ENCODE measurements at regions of chr11 and their contacts with region 1.

Region 1: GRCh38 chr11:111429066-111429506 is 50.0 kb upstream of the POU2AF1 start:
- DNase-seq: no peak
- ATAC-seq: peak; percentile 98
- H3K4me3 ChIP-seq: no peak overlapping the region
- H3K27ac ChIP-seq: no peak overlapping the region
- H3K4me1 ChIP-seq: peaks cover 6% of the 10 kb centered on the region; the same call in 1 of the 2 replicates
- H3K27me3 ChIP-seq: no peaks in the 10 kb centered on the region
- CTCF ChIP-seq: peak; percentile 82 to 96 (median 92)
- EP300 ChIP-seq: no peak
- POLR2A ChIP-seq: no peak
- RAD21 ChIP-seq: peak; percentile 87

Region 2: GRCh38 chr11:111260811-111261210 is 168.3 kb before region 1 on chr11:
- CTCF ChIA-PET with region 1: interaction called, 13 read pairs
- POLR2A ChIA-PET with region 1: no interaction called
- RAD21 ChIA-PET with region 1: no interaction called
- SMC1A ChIA-PET with region 1: no interaction called
- in situ Hi-C with region 1: no loop called
- intact Hi-C with region 1: no loop called
- DNase-seq: no peak
- ATAC-seq: no peak
- H3K4me3 ChIP-seq: no peak overlapping the region
- H3K27ac ChIP-seq: no peak overlapping the region
- H3K4me1 ChIP-seq: no peaks in the 10 kb centered on the region
- H3K27me3 ChIP-seq: no peaks in the 10 kb centered on the region; a peak in 1 of 4 replicates
- CTCF ChIP-seq: no peak
- EP300 ChIP-seq: no peak
- POLR2A ChIP-seq: no peak
- RAD21 ChIP-seq: no peak

Region 3: DNA sequence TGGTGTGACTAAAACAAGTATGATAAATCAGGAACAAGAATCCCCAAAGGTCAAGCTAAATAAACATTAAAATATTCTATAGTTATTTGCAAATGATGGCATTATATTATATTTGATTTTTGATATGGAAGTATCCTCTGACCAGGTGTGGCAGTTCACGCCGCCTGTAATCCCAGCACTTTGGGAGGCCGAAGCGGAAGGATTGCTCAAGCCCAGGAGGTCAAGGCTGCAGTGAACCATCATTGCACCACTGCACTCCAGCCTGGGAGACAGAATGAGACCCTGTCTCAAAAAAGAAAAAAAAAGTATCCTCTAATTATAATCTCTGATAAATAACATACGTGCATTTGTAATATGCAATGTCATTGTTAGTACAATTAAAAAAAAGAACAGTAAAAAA is 137.3 kb before region 1 on chr11:
- CTCF ChIA-PET with region 1: interaction called, 680 read pairs
- POLR2A ChIA-PET with region 1: no interaction called
- RAD21 ChIA-PET with region 1: interaction called, 13 read pairs
- SMC1A ChIA-PET with region 1: interaction called, 455 read pairs
- in situ Hi-C with region 1: no loop called
- intact Hi-C with region 1: no loop called
- DNase-seq: no peak
- ATAC-seq: no peak
- H3K4me3 ChIP-seq: no peak overlapping the region
- H3K27ac ChIP-seq: no peak overlapping the region
- H3K4me1 ChIP-seq: no peaks in the 10 kb centered on the region
- H3K27me3 ChIP-seq: no peaks in the 10 kb centered on the region
- CTCF ChIP-seq: no peak
- EP300 ChIP-seq: no peak
- POLR2A ChIP-seq: no peak
- RAD21 ChIP-seq: no peak

Region 4: DNA sequence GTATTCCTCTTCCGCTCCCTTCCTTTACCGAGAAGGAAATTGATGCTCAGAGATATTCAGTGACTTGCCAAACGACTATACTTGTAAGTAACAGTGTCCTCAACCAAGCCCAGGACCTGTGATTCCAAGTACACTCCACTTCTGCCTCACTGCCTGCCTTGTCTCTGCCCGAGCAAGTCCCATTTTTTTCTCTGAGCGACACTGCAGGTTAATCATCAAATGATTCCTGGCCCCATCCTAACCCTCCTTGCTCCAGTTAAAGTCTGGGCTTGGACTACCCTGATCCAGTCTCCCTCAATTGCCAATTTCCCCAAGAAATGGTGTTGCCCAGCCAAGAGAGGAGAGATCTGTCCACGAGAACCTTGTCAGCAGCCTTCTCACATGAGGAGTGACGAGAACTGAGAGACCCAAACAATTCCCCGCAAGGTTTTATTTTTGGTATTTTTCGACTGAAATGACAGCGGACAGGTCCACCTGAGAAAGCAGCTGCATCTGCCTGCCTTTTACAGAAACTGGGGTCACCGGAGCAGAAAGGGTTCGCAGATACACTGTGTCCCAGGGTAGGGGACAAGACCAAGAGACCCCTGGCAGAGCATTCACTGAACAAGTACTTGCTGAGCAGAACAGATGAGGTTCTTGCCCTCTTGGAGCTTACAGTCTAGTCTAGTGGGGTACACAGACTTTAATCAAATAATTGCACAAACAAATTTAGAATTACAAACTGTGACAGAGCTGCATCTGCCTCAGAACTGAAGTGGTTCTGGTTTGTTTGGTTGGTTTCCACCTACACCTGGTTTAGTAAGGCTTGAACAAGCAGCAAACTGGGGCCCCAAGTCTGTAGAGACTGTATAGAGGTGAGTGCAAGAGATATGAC is 61.4 kb before region 1 on chr11:
- CTCF ChIA-PET with region 1: interaction called, 213 read pairs
- POLR2A ChIA-PET with region 1: interaction called, 4 read pairs
- RAD21 ChIA-PET with region 1: interaction called, 657 read pairs
- SMC1A ChIA-PET with region 1: interaction called, 972 read pairs
- in situ Hi-C with region 1: no loop called
- intact Hi-C with region 1: no loop called
- DNase-seq: peak; percentile 80
- ATAC-seq: peak; percentile 60
- H3K4me3 ChIP-seq: peak overlapping the region; percentile 67
- H3K27ac ChIP-seq: peak overlapping the region; percentile 97
- H3K4me1 ChIP-seq: peaks cover 91% of the 10 kb centered on the region
- H3K27me3 ChIP-seq: no peaks in the 10 kb centered on the region
- CTCF ChIP-seq: no peak
- EP300 ChIP-seq: peak; percentile 78 to 92
- POLR2A ChIP-seq: peak; percentile 50; the same call in 1 of the 2 replicates
- RAD21 ChIP-seq: 0 out of 2 replicates have a peak, but pooled peaks have one; percentile 4

Region 5: DNA sequence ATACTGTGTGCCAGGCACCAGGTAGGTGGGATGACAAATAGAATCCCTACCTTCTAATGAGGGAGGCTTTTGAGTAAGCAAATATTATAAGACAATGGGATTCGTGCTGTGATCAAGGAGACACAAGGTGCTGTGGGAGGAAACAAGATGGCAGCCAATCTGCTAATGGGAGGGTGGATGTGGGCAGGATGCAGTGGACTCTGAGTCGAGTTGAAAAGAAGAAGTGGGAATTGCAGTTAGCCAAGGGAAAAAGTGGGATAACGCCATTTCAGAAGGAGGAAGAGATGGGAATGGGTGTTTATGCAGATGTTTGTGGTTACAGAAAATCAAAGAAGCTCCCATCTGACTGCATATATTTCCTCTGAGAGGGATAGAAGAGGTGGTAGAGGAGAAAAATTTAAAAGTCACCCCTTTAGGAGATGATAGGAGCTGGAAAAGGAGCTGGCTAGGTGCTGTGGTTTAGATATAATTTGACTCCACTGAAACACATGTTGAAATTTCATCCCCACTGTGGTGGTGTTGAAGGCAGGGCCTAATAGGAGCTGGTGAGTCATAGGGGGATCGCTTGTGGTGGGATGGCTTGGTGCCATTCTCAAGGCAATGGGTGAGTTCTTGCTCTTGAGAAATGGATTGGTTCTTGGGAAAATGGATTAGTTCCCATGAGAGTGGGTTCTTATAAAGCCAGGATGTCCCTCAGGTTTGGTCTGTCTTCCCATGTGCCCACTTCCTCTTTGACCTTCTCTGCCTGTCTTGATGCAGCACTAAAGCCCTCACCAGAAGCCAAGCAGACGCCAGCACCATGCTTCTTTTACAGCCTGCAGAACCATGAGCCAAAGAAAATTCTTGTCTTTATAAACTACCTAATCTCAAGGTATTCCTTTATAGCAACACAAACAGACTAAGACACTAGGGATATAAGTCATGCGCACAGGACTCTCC is 20.0 kb before region 1 on chr11:
- CTCF ChIA-PET with region 1: interaction called, 143 read pairs
- POLR2A ChIA-PET with region 1: no interaction called
- RAD21 ChIA-PET with region 1: interaction called, 77 read pairs
- SMC1A ChIA-PET with region 1: interaction called, 3 read pairs
- in situ Hi-C with region 1: no loop called
- intact Hi-C with region 1: no loop called
- DNase-seq: peak; percentile 91
- ATAC-seq: peak; percentile 69
- H3K4me3 ChIP-seq: peak overlapping the region; percentile 14; the same call in 1 of the 2 replicates
- H3K27ac ChIP-seq: peak overlapping the region; percentile 92
- H3K4me1 ChIP-seq: peaks cover 64% of the 10 kb centered on the region
- H3K27me3 ChIP-seq: no peaks in the 10 kb centered on the region
- CTCF ChIP-seq: no peak
- EP300 ChIP-seq: peak in 1 of 2 experiments; percentile 29; a peak in 1 of 4 replicates
- POLR2A ChIP-seq: no peak
- RAD21 ChIP-seq: no peak

Region 6: GRCh38 chr11:111446404-111447111 is 17.5 kb after region 1 on chr11:
- CTCF ChIA-PET with region 1: interaction called, 72 read pairs
- POLR2A ChIA-PET with region 1: interaction called, 4 read pairs
- RAD21 ChIA-PET with region 1: interaction called, 31 read pairs
- SMC1A ChIA-PET with region 1: interaction called, 50 read pairs
- in situ Hi-C with region 1: no loop called
- intact Hi-C with region 1: no loop called
- DNase-seq: peak; percentile 76
- ATAC-seq: peak; percentile 98
- H3K4me3 ChIP-seq: no peak overlapping the region
- H3K27ac ChIP-seq: no peak overlapping the region
- H3K4me1 ChIP-seq: peaks cover 9% of the 10 kb centered on the region
- H3K27me3 ChIP-seq: no peaks in the 10 kb centered on the region
- CTCF ChIP-seq: peak; percentile 91 to 96 (median 94)
- EP300 ChIP-seq: no peak
- POLR2A ChIP-seq: no peak
- RAD21 ChIP-seq: peak; percentile 100